ENCODE measurements at regions of chr9 and their contacts with region 1.

Region 1: GRCh38 chr9:126500684-126501382 is 112.9 kb upstream of the LMX1B start:
- DNase-seq: no peak
- ATAC-seq: peak; percentile 85
- H3K4me3 ChIP-seq: no peak overlapping the region
- H3K27ac ChIP-seq: no peak overlapping the region
- H3K4me1 ChIP-seq: no peaks in the 10 kb centered on the region
- H3K27me3 ChIP-seq: peaks cover 1 to 5% of the 10 kb centered on the region in 2 experiments; a peak in 3 of 4 replicates
- CTCF ChIP-seq: peak; percentile 88 to 95 (median 93)
- EP300 ChIP-seq: no peak
- POLR2A ChIP-seq: no peak
- RAD21 ChIP-seq: peak; percentile 84

Region 2: DNA sequence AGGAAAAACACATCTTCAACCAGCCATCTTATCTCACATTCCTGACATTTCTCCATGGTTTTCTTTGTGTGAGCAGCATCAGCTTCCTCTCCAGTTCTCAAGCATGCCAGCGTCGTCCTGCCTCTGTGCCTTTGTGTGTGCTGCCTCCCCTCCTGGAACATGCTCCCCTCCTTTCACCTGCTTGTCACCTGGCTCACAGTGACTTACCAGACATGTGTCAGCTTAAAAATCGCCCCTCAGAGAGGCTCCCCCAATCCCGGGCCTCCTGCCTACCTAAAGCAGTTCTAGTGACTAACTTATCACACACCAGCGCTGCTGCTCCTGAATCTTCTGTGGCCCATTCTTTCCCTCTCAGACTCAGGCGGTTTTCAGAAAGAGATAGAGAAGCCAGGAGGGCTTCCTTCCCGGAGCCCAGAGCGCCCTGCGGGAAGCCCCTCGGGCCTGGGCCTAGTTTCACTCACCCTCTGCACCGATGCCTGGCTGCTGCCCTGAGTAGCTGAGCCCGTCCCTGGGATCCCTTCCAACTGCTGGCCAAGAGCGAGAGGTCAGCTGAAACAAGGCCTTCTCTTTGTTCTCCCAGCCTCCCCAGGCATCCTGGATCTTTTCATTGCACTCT is 225.3 kb before region 1 on chr9:
- CTCF ChIA-PET with region 1: no interaction called
- POLR2A ChIA-PET with region 1: no interaction called
- RAD21 ChIA-PET with region 1: no interaction called
- SMC1A ChIA-PET with region 1: no interaction called
- in situ Hi-C with region 1: no loop called
- intact Hi-C with region 1: no loop called
- DNase-seq: no peak
- ATAC-seq: no peak
- H3K4me3 ChIP-seq: no peak overlapping the region
- H3K27ac ChIP-seq: no peak overlapping the region
- H3K4me1 ChIP-seq: no peaks in the 10 kb centered on the region
- H3K27me3 ChIP-seq: peaks cover 0 to 8% of the 10 kb centered on the region in 2 experiments; a peak in 2 of 4 replicates
- CTCF ChIP-seq: no peak
- EP300 ChIP-seq: no peak
- POLR2A ChIP-seq: no peak
- RAD21 ChIP-seq: no peak

Region 3: GRCh38 chr9:126524353-126525070 is 23.7 kb after region 1 on chr9:
- CTCF ChIA-PET with region 1: interaction called, 10 read pairs
- POLR2A ChIA-PET with region 1: no interaction called
- RAD21 ChIA-PET with region 1: no interaction called
- SMC1A ChIA-PET with region 1: no interaction called
- in situ Hi-C with region 1: no loop called
- intact Hi-C with region 1: no loop called
- DNase-seq: no peak
- ATAC-seq: no peak
- H3K4me3 ChIP-seq: no peak overlapping the region
- H3K27ac ChIP-seq: no peak overlapping the region
- H3K4me1 ChIP-seq: no peaks in the 10 kb centered on the region
- H3K27me3 ChIP-seq: peaks cover 3 to 15% of the 10 kb centered on the region in 2 experiments
- CTCF ChIP-seq: no peak
- EP300 ChIP-seq: no peak
- POLR2A ChIP-seq: no peak
- RAD21 ChIP-seq: no peak

Region 4: DNA sequence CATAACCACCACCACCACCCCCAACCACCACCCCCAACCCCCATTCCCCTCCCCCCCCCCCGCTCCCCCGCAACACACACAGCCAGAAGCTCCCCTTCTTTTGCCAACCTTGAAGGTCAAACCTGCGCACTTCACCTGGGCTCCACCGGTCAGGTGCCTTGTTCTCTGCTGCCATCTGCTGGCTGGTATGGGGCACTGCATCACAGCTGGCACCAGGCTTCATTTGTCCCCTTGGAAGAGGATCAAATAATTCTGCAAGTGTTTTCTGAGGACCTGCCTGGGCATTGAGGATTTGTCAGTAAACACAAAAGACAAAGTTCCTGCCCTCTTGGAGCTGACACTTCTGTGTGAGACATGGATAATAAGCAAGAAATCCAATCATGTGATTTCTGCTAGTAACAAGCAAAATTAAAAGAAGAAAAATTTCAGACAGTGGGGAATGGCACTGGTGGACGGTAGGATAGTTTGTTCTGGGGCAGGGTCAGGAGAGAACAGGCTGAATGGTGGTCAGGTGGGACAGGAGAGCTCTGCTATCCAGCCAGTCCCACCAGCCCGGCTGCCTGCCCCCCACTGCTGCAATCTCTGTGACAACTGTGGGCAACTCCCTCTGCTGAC is 57.3 kb after region 1 on chr9:
- CTCF ChIA-PET with region 1: interaction called, 86 read pairs
- POLR2A ChIA-PET with region 1: no interaction called
- RAD21 ChIA-PET with region 1: interaction called, 15 read pairs
- SMC1A ChIA-PET with region 1: interaction called, 7 read pairs
- in situ Hi-C with region 1: loop called (anchors 5 kb)
- intact Hi-C with region 1: loop called (anchors 1 kb)
- DNase-seq: peak; percentile 27
- ATAC-seq: peak; percentile 88
- H3K4me3 ChIP-seq: no peak overlapping the region
- H3K27ac ChIP-seq: no peak overlapping the region
- H3K4me1 ChIP-seq: no peaks in the 10 kb centered on the region
- H3K27me3 ChIP-seq: no peaks in the 10 kb centered on the region; a peak in 1 of 4 replicates
- CTCF ChIP-seq: peak; percentile 93 to 99 (median 98)
- EP300 ChIP-seq: no peak
- POLR2A ChIP-seq: no peak
- RAD21 ChIP-seq: peak; percentile 98

Measured in GM12878 (cell line).